ENCODE measurements at regions of chr2 and their contacts with region 1.

Region 1: GRCh38 chr2:172931918-172932520 is 143.6 kb upstream of the MAP3K20 start:
- DNase-seq: peak; percentile 79
- ATAC-seq: peak; percentile 42
- H3K4me3 Mint-ChIP-seq: no peak overlapping the region
- H3K27ac Mint-ChIP-seq: no peak overlapping the region
- H3K4me1 Mint-ChIP-seq: peaks cover 6% of the 10 kb centered on the region
- H3K27me3 Mint-ChIP-seq: peaks cover 7% of the 10 kb centered on the region

Region 2: GRCh38 chr2:172813314-172813888 is 118.6 kb before region 1 on chr2:
- CTCF ChIA-PET with region 1: interaction called, 67 read pairs
- POLR2A ChIA-PET with region 1: no interaction called
- DNase-seq: no peak
- ATAC-seq: no peak
- H3K4me3 Mint-ChIP-seq: no peak overlapping the region
- H3K27ac Mint-ChIP-seq: no peak overlapping the region
- H3K4me1 Mint-ChIP-seq: no peaks in the 10 kb centered on the region
- H3K27me3 Mint-ChIP-seq: peaks cover 6% of the 10 kb centered on the region

Region 3: GRCh38 chr2:172894689-172895387 is 37.2 kb before region 1 on chr2:
- CTCF ChIA-PET with region 1: interaction called, 14 read pairs
- POLR2A ChIA-PET with region 1: no interaction called
- DNase-seq: no peak
- ATAC-seq: no peak
- H3K4me3 Mint-ChIP-seq: no peak overlapping the region
- H3K27ac Mint-ChIP-seq: no peak overlapping the region
- H3K4me1 Mint-ChIP-seq: no peaks in the 10 kb centered on the region
- H3K27me3 Mint-ChIP-seq: peaks cover 28% of the 10 kb centered on the region

Region 4: GRCh38 chr2:172944022-172944793 is 12.2 kb after region 1 on chr2:
- CTCF ChIA-PET with region 1: interaction called, 16 read pairs
- POLR2A ChIA-PET with region 1: no interaction called
- DNase-seq: no peak
- ATAC-seq: no peak
- H3K4me3 Mint-ChIP-seq: no peak overlapping the region
- H3K27ac Mint-ChIP-seq: peak overlapping the region; percentile 41
- H3K4me1 Mint-ChIP-seq: peaks cover 24% of the 10 kb centered on the region
- H3K27me3 Mint-ChIP-seq: peaks cover 2% of the 10 kb centered on the region

Region 5: DNA sequence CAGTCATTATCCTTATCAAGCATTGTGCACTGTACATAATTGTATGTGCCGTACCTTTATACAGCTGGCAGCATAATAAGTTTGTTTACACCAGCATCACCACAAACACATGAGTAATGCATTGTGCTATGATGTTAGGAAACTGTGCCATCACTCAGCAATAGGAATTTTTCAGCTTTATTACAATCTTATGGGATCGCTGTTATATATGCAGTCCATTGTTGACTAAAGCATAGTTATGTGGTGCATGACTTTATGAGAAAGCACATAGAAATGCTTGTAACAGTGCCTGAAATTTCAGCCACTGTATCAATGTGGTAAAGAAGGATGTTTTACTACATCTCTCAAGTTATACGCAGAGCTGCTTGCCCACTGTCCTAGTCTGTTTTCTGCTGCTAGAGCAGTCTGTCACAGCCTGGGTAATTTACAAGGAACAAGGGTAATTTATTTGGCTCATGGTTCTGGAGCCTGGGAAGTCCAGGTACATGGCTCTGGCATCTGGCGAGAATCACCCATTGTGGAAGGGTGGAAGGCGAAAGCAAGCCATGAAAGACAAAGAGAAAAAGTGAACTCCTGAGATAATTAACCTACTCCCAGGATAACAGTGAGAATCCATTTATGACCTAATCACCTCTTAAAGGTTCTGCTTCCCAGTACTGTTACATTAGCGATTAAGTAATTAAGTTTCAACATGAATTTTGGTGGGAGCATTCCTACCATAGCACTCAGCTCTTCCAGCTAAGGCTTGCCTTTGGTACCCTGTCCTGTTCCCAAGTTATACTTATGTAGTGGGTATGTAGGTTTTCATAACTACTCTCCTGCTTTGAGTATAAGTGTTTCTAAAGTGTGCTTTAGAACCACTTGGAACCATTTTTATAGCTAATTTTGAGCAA is 148.2 kb after region 1 on chr2:
- CTCF ChIA-PET with region 1: no interaction called
- POLR2A ChIA-PET with region 1: no interaction called
- DNase-seq: no peak
- ATAC-seq: no peak
- H3K4me3 Mint-ChIP-seq: no peak overlapping the region
- H3K27ac Mint-ChIP-seq: no peak overlapping the region
- H3K4me1 Mint-ChIP-seq: peaks cover 15% of the 10 kb centered on the region
- H3K27me3 Mint-ChIP-seq: peaks cover 9% of the 10 kb centered on the region